Calu3 (cell line): ENCODE measurements at regions of chr2 and their contacts with region 1.

Region 1: DNA sequence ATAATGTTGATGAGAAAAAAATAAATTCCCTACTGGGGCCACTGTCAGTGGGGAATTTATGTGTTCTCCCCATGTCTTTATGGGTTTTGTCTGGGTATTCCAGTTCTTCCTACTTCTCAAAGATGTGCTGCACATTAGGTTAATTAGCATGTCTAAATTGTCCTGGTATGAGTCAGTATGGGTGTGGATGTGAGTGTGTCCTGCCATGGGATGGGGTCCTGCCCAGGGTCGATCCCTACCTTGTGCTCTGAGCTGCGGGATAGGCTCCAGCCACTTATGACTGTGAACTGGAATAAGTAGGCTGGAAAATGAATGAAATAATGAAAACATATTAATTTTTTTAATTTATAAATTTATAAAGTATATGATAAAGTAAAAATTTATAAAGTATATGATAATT is 167.5 kb downstream of the UBR3 start:
- DNase-seq: no peak
- H3K4me3 Mint-ChIP-seq: no peak overlapping the region
- H3K27ac Mint-ChIP-seq: no peak overlapping the region
- H3K4me1 Mint-ChIP-seq: no peaks in the 10 kb centered on the region
- H3K27me3 Mint-ChIP-seq: no peaks in the 10 kb centered on the region
- CTCF ChIP-seq: no peak

Region 2: DNA sequence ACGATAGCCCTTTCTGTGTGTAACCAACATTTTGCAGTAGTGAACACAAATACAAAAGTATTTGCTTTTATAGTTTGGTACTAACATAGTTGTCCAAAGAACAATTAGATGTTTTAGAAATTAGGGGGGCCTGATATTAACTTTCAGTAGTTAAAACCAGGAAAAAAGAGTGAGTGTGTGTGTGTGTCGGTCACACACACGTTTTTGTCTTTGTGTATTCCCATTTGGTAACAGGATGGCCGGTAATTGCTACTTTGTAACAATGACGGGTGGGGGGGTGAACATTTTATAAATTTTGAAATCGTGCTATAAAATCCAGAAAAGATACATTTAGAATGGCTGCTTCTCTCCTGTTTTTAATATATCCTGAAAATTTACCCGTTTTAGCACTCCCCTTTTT is 409.1 kb before region 1 on chr2:
- CTCF ChIA-PET with region 1: no interaction called
- intact Hi-C with region 1: no loop called
- DNase-seq: no peak
- H3K4me3 Mint-ChIP-seq: peak overlapping the region; percentile 94
- H3K27ac Mint-ChIP-seq: peak overlapping the region; percentile 96
- H3K4me1 Mint-ChIP-seq: no peaks in the 10 kb centered on the region
- H3K27me3 Mint-ChIP-seq: no peaks in the 10 kb centered on the region
- CTCF ChIP-seq: no peak

Region 3: DNA sequence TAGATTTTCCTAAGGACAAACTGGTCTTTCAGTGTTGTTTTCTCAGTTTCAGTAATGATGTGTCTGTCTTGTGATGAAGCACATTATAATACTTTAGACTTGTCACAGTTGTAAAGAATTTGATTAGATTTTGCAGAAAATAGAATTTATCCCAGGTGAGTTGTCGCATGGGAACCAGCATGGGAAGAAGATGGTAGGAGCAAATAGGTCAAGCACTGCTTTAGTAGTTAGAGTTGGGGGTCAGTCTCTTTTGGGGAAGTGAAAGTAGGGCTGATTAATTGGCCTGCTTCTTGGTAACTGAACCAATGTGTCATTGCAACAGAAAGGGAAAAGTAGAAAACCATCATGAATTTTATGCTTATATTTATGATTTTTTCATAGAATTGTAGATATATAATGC is 30.0 kb after region 1 on chr2:
- CTCF ChIA-PET with region 1: no interaction called
- intact Hi-C with region 1: no loop called
- DNase-seq: no peak
- H3K4me3 Mint-ChIP-seq: no peak overlapping the region
- H3K27ac Mint-ChIP-seq: no peak overlapping the region
- H3K4me1 Mint-ChIP-seq: no peaks in the 10 kb centered on the region
- H3K27me3 Mint-ChIP-seq: no peaks in the 10 kb centered on the region
- CTCF ChIP-seq: no peak

Region 4: DNA sequence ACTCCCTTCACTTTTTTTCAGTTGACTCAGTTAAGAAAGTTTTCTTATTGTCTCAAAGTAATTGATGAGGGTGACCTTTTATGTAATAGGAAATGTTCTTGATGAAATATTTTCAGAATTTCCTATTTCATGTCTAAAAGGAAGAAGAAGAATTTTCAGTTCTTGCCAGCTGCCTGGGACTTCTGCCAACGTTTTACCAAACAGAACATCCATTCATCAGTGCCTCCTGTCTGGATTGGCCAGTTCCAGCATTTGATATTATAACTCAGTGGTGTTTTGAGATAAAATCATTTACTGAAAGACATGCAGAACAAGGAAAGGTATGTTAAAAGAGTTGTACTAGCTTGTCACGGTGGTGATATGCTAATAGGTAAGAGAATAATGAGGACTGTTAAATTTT is 78.5 kb after region 1 on chr2:
- CTCF ChIA-PET with region 1: no interaction called
- intact Hi-C with region 1: loop called (anchors 2 kb)
- DNase-seq: peak; percentile 78
- H3K4me3 Mint-ChIP-seq: no peak overlapping the region
- H3K27ac Mint-ChIP-seq: peak overlapping the region; percentile 88
- H3K4me1 Mint-ChIP-seq: peaks cover 37% of the 10 kb centered on the region
- H3K27me3 Mint-ChIP-seq: no peaks in the 10 kb centered on the region
- CTCF ChIP-seq: no peak

Region 5: DNA sequence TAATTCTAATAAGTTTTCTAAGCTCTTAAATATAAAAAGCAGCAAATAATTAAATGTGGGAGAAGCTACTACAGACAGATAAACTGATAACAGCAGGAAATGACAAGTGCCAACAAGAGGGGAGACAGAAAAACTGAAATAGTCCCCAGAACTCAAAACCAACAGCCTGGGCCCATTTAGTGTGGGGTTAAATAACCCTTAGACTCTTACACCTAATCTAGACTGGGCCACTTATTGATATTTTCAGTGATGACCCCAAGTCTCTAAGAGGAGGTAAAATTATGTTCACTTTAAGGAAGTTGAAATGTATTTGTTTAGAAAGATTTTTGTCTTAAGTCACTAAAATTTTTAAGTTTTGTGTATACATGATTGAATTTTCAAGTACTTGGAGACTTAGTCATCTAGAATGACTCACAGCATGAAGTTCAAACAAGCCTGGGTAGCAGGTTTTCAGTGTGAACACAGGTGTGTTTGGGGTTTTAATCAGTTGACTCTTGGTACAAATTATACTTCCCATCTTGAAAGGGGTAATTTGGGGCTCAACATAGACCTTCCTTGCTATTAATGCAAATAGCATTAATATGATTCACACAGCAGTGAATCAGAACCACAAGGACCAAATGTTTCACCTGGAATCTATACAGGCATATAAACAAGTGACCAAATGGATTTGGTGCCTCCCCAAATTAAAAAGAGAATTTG is 128.3 kb after region 1 on chr2:
- CTCF ChIA-PET with region 1: no interaction called
- intact Hi-C with region 1: no loop called
- DNase-seq: peak; percentile 41
- H3K4me3 Mint-ChIP-seq: no peak overlapping the region
- H3K27ac Mint-ChIP-seq: no peak overlapping the region
- H3K4me1 Mint-ChIP-seq: peaks cover 61% of the 10 kb centered on the region
- H3K27me3 Mint-ChIP-seq: no peaks in the 10 kb centered on the region
- CTCF ChIP-seq: no peak